ENCODE measurements at regions of chr10 and their contacts with region 1.

Region 1: DNA sequence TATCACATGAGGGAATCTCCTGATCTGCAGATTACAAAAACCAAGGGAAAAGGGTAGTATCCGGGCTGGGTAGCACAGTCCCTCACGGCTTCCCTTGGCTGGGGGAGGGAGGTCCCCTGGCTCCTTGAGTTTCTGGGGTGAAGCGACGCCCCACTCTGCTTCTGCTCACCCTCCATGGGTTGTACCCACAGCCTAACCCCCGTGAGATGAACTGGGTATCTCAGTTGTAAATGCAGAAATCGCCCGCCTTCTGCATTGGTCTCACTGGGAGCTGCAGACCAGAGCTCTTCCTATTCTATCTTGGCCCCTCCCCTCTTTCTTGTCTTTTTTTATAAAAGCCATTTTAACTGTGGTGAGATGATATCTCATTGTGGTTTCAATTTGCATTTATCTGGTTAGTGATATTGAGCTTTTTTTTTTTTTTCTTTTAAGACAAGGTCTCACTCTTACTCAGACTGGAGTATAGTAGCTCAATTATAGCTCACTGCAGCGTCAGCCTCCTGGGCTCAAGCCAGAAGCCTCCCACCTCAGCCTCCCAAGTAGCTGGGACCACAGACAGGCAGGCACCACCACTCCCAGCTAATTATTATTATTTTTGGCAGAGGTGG is 87.8 kb downstream of the ABCC2 start:
- DNase-seq: no peak
- H3K4me3 ChIP-seq: no peak overlapping the region
- H3K27ac ChIP-seq: no peak overlapping the region
- H3K4me1 ChIP-seq: no peaks in the 10 kb centered on the region
- H3K27me3 ChIP-seq: no peaks in the 10 kb centered on the region
- CTCF ChIP-seq: no peak
- POLR2A ChIP-seq: no peak

Region 2: GRCh38 chr10:99548041-99548530 is 322.1 kb before region 1 on chr10:
- intact Hi-C with region 1: no loop called
- DNase-seq: peak; percentile 45
- H3K4me3 ChIP-seq: no peak overlapping the region
- H3K27ac ChIP-seq: no peak overlapping the region
- H3K4me1 ChIP-seq: no peaks in the 10 kb centered on the region
- H3K27me3 ChIP-seq: no peaks in the 10 kb centered on the region
- CTCF ChIP-seq: peak in 1 of 3 experiments; percentile 9
- POLR2A ChIP-seq: no peak

Region 3: GRCh38 chr10:99698504-99699080 is 171.6 kb before region 1 on chr10:
- intact Hi-C with region 1: no loop called
- DNase-seq: no peak
- H3K4me3 ChIP-seq: no peak overlapping the region
- H3K27ac ChIP-seq: no peak overlapping the region
- H3K4me1 ChIP-seq: no peaks in the 10 kb centered on the region
- H3K27me3 ChIP-seq: no peaks in the 10 kb centered on the region
- CTCF ChIP-seq: no peak
- POLR2A ChIP-seq: no peak

Region 4: GRCh38 chr10:99945263-99945662 is 75.0 kb after region 1 on chr10:
- intact Hi-C with region 1: loop called (anchors 5 kb)
- DNase-seq: peak; percentile 70
- H3K4me3 ChIP-seq: no peak overlapping the region
- H3K27ac ChIP-seq: peak overlapping the region; percentile 39 to 47
- H3K4me1 ChIP-seq: peaks cover 34% of the 10 kb centered on the region
- H3K27me3 ChIP-seq: no peaks in the 10 kb centered on the region
- CTCF ChIP-seq: no peak
- POLR2A ChIP-seq: no peak

Region 5: GRCh38 chr10:100081075-100082001 is 211.1 kb after region 1 on chr10 and contains the start of gene CPN1:
- intact Hi-C with region 1: no loop called
- DNase-seq: no peak
- H3K4me3 ChIP-seq: no peak within 1 kb of the TSS
- H3K27ac ChIP-seq: no peak within 1 kb of the TSS
- H3K4me1 ChIP-seq: no peaks in the 10 kb centered on the region
- H3K27me3 ChIP-seq: no peaks in the 10 kb centered on the region
- CTCF ChIP-seq: no peak
- POLR2A ChIP-seq: no peak
- total RNA-seq, gene CPN1: 0.87 to 2.7 TPM